Sciatic nerve (tissue), 2 donors: ENCODE measurements at regions of chr13 and their contacts with region 1.

Region 1: GRCh38 chr13:98816406-98816805 is 63.9 kb upstream of the SLC15A1 start:
- DNase-seq: no peak
- ATAC-seq: no peak

Region 2: GRCh38 chr13:98769736-98770135 is 46.7 kb before region 1 on chr13:
- intact Hi-C with region 1: loop called (anchors 1 kb)
- DNase-seq: no peak
- ATAC-seq: no peak

Region 3: DNA sequence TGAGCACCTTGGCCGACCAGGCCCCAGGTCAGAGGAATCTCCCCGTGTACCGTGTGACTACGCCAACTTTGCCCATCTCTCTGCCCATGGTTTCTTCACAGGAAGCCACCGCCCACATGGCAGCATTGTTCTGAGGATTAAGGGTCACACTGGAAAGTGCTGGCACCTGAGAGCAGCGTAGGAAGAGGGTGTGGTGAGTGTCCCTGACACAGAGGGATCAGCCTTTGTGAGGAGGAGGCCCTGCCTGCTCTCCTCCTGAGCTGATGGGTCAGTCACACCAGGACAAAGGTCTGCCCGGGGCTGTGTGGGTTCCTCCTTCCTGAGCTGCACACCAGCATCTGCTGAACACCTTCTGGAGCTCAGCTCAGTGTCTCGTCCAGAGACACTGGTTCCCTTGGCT is 31.7 kb before region 1 on chr13:
- intact Hi-C with region 1: no loop called
- DNase-seq: no peak
- ATAC-seq: no peak